Heart right ventricle (tissue), 16 donors: ENCODE measurements at regions of chr5 and their contacts with region 1.

Region 1: GRCh38 chr5:109409844-109410388 is at the start of gene PJA2:
- DNase-seq: peak; percentile 98 to 100
- ATAC-seq: peak; percentile 94 to 99 (median 95)
- H3K4me3 ChIP-seq: peak within 1 kb of the TSS; percentile 66 to 90 (median 80)
- H3K27ac ChIP-seq: peak within 1 kb of the TSS; percentile 89 to 99 (median 98)
- H3K4me1 ChIP-seq: peaks cover 0 to 62% (median 40%) of the 10 kb centered on the region in 9 donors
- H3K27me3 ChIP-seq: no peaks in the 10 kb centered on the region
- CTCF ChIP-seq: peak in 8 of 9 donors; percentile 27 to 59 (median 45)
- total RNA-seq, gene PJA2: 78.7 to 103 (median 89.2) TPM

Region 2: DNA sequence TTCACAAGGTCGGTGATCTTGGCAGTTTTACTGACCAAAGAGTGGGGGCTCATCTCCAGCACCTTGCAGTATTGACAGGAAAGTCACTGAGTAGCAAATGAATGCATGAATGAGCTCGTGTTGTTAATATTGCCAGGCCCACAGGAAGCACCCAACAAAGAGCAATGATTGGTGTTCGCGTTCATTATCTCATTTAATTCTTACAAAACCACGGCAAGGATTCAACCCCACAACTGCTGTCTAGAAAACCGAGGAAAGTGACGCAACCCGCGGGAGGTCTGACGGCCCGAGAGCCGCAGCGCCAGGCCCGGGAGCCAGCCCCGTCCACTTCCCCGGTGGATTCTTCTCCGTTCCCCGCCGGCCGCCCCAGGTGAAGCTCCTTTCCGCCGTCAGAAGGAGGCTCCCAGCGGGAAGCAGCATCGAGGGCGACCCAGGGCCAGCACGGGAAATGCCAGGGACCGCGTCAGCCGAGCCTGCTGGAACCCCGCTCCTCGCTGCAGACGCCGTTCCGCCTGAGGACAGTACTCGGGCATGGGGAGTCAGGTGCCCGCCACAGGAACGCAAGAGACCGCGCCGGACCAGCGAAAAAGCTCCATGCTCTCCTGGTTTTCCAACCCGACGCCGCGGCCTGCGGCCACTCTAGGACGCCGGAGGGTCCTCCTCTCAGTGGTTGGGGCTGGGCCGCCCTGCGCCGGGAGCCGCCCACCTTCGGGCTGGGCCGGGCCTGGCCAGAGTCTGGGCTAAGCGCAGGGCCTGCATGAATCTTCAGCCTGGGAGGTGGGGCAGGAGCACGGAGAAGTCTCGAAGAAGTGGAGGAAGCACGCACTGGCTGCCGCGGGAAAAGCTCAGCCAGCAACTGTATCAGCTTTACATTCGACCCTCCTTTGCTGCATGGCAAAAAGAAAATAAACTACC is 682.0 kb before region 1 on chr5:
- intact Hi-C with region 1: loop called in 2 of 10 experiments (anchors 2 to 10 kb)
- DNase-seq: peak; percentile 90 to 93
- ATAC-seq: peak; percentile 100
- H3K4me3 ChIP-seq: peak overlapping the region; percentile 74 to 98 (median 88)
- H3K27ac ChIP-seq: peak overlapping the region; percentile 72 to 97 (median 94)
- H3K4me1 ChIP-seq: peaks cover 0 to 36% (median 6%) of the 10 kb centered on the region in 9 donors
- H3K27me3 ChIP-seq: no peaks in the 10 kb centered on the region
- CTCF ChIP-seq: peak in 2 of 9 donors; percentile 23 to 40

Region 3: GRCh38 chr5:108748401-108749127 is 661.4 kb before region 1 on chr5:
- intact Hi-C with region 1: loop called in 1 of 10 experiments (anchors 2 kb)
- DNase-seq: peak; percentile 99
- ATAC-seq: peak; percentile 97 to 100 (median 98)
- H3K4me3 ChIP-seq: peak overlapping the region; percentile 72 to 99 (median 92)
- H3K27ac ChIP-seq: peak overlapping the region; percentile 95 to 100 (median 98)
- H3K4me1 ChIP-seq: peaks cover 0 to 31% (median 14%) of the 10 kb centered on the region in 9 donors
- H3K27me3 ChIP-seq: no peaks in the 10 kb centered on the region
- CTCF ChIP-seq: peak in 3 of 9 donors; percentile 23 to 48 (median 41)

Region 4: DNA sequence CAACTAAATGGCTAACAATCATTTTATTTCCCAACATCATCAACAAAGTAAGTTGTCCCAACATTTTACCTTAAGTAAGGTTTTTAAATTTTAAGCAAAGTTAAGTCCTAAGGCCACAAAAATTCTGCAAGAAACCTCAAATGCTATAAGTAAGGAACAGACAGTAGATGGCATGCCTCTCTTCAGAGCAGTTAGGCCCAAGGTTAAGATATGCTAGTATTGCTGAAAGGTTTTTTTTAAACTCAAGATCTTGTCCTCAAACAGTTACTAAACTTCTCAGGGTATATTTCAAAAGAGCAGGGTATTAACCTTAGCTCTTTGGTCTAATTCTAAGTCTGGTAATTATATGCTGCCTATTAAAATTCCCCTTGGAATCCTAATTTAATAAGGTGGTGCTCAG is 35.3 kb before region 1 on chr5:
- intact Hi-C with region 1: loop called in 1 of 10 experiments (anchors 5 kb)
- DNase-seq: no peak
- ATAC-seq: no peak
- H3K4me3 ChIP-seq: no peak overlapping the region
- H3K27ac ChIP-seq: no peak overlapping the region
- H3K4me1 ChIP-seq: peaks cover 0 to 50% (median 30%) of the 10 kb centered on the region in 9 donors
- H3K27me3 ChIP-seq: no peaks in the 10 kb centered on the region
- CTCF ChIP-seq: peak in 2 of 9 donors; percentile 21 to 30

Region 5: DNA sequence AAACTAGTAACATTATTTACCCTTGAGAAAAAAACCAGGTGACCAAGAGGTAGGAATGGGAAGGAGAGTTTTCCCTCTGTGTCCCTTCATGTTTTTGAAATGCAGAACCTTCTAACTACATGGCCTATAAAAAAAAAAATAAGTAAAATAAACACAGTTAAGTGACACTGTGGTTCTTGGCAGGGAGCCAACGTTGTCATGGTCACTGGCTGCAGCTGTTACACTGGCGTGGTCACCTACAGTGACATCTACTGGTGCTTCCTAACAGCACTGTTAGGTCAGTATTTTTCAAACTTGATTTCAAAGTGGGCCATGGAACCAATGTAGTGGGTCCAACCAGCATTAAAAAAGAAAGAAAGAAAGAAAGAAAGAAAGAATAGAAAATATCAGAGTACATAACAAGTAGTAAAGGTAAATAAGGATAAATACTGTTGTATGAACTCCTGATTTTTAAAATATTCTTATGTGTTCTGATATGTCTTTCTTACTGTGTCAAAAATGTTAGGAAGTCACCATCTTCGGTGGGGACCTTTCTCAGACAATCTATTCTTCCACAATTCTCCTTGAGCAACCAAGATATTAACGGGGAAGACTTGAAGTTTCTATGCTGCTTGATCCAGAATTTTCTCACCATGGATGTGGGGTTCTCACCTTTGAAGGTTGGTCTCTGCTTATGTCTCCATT is 59.0 kb after region 1 on chr5:
- intact Hi-C with region 1: loop called in 1 of 10 experiments (anchors 1 kb)
- DNase-seq: peak; percentile 93 to 98
- ATAC-seq: peak; percentile 83 to 99 (median 97)
- H3K4me3 ChIP-seq: no peak overlapping the region
- H3K27ac ChIP-seq: no peak overlapping the region
- H3K4me1 ChIP-seq: peaks cover 0 to 7% (median 4%) of the 10 kb centered on the region in 9 donors
- H3K27me3 ChIP-seq: no peaks in the 10 kb centered on the region
- CTCF ChIP-seq: peak; percentile 63 to 93 (median 78)